WTC11 (cell line): ENCODE measurements at regions of chr12 and their contacts with region 1.

Region 1: GRCh38 chr12:3041558-3042164 is 35.5 kb upstream of the TSPAN9 start:
- DNase-seq: peak; percentile 76
- ATAC-seq: peak; percentile 68
- H3K4me3 Mint-ChIP-seq: no peak overlapping the region
- H3K27ac Mint-ChIP-seq: 0 out of 2 replicates have a peak overlapping the region, but pooled peaks have one; percentile 19
- H3K4me1 Mint-ChIP-seq: peaks cover 4% of the 10 kb centered on the region; the same call in 1 of the 2 replicates
- H3K27me3 Mint-ChIP-seq: no peaks in the 10 kb centered on the region
- CTCF ChIP-seq: peak; percentile 62; the same call in 1 of the 2 replicates

Region 2: GRCh38 chr12:2853626-2854025 is 188.0 kb before region 1 on chr12:
- CTCF ChIA-PET with region 1: interaction called, 16 read pairs
- POLR2A ChIA-PET with region 1: no interaction called
- DNase-seq: peak; percentile 95
- ATAC-seq: peak; percentile 93
- H3K4me3 Mint-ChIP-seq: no peak overlapping the region
- H3K27ac Mint-ChIP-seq: no peak overlapping the region
- H3K4me1 Mint-ChIP-seq: peaks cover 3% of the 10 kb centered on the region; the same call in 1 of the 2 replicates
- H3K27me3 Mint-ChIP-seq: no peaks in the 10 kb centered on the region; the same call in 1 of the 2 replicates
- CTCF ChIP-seq: peak; percentile 88

Region 3: DNA sequence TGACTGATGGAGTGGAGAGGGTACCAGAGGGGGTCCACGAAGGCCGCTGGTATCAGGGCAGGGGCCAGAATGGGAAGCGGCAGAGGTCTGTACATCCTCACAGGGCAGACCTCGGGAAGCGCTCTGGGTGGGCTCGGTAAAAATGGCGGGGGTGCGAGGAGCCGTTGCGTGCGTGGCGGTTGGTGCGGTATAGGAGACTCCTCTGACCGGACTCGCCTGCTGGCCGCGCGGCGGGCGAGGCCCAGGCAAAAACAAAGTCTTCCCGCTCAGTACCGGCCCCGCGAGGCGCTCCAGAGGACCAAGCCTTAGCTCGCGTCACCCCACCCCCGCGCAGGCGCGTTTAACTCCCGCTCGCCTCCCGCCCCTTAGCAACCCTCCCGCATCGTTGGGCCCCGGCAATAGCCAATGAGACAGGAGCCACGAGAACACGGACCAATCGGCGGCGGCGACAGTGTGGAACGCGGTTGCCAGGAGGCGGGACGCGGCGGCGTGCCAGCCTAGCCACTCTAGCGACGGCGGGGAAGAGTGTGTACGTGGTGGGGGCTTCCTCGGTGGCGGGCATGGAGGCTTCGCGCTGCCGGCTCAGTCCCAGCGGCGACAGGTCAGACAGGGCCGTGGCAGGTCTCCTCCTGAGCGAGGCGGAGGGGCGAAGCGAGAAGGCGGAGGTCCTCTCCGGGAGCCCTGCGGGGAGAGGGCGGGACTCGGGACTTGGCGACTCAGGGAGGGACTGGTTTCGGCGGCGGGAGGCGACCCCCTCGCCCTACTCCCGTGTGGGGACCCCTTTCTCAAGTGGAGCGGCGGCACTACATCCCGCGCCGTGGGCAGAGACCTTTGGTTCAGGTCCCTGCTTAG is 151.0 kb before region 1 on chr12 and contains the start of gene TULP3:
- CTCF ChIA-PET with region 1: interaction called, 19 read pairs
- POLR2A ChIA-PET with region 1: no interaction called
- DNase-seq: peak; percentile 98
- ATAC-seq: peak; percentile 93
- H3K4me3 Mint-ChIP-seq: peak within 1 kb of the TSS; percentile 78
- H3K27ac Mint-ChIP-seq: peak within 1 kb of the TSS; percentile 93
- H3K4me1 Mint-ChIP-seq: peaks cover 18% of the 10 kb centered on the region
- H3K27me3 Mint-ChIP-seq: no peaks in the 10 kb centered on the region; the same call in 1 of the 2 replicates
- CTCF ChIP-seq: no peak
- total RNA-seq, gene TULP3: 17.4 to 18.8 TPM (median 18.0 TPM) in 3 replicates

Region 4: GRCh38 chr12:3004655-3005565 is 36.8 kb before region 1 on chr12:
- CTCF ChIA-PET with region 1: interaction called, 12 read pairs
- POLR2A ChIA-PET with region 1: no interaction called
- DNase-seq: no peak
- ATAC-seq: peak; percentile 40
- H3K4me3 Mint-ChIP-seq: no peak overlapping the region
- H3K27ac Mint-ChIP-seq: peak overlapping the region; percentile 82
- H3K4me1 Mint-ChIP-seq: peaks cover 20% of the 10 kb centered on the region
- H3K27me3 Mint-ChIP-seq: no peaks in the 10 kb centered on the region
- CTCF ChIP-seq: no peak

Region 5: DNA sequence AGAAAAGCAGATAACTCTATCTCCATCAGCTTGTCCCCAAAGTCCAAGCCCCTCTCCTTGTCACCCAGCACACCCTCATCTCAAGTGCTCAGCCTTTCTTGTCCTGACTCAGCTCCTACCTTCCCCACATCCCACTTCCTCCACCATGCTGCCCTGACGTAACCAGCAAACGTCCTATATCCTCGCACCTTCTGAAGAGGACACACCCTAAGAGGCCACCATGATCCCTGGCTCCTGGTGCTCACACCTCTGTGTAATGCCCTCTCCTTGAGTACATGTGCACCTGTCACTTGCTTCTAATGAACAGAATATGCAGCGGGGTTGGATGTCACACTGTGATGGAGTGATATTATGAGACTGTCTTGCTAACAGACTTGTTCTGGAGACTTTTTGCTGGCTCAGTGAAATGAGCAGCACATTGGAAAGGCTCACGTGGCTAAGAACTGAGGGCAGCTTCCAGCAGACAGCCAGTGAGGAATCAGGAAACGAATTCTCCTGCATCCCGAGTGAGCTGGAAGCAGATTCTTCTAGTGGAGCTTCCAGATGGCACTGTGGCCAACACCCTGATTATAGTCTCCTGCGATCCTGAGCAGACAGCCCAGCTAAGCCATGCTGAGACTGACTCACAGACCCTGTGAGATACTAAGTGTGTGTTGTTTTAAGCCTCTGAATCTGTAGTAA is 19.3 kb after region 1 on chr12:
- CTCF ChIA-PET with region 1: interaction called, 12 read pairs
- POLR2A ChIA-PET with region 1: no interaction called
- DNase-seq: no peak
- ATAC-seq: no peak
- H3K4me3 Mint-ChIP-seq: no peak overlapping the region
- H3K27ac Mint-ChIP-seq: no peak overlapping the region
- H3K4me1 Mint-ChIP-seq: peaks cover 22% of the 10 kb centered on the region
- H3K27me3 Mint-ChIP-seq: peaks cover 2% of the 10 kb centered on the region; the same call in 1 of the 2 replicates
- CTCF ChIP-seq: no peak